Panc1 (cell line): ENCODE measurements at regions of chr13 and their contacts with region 1.

Region 1: GRCh38 chr13:50387051-50387581 is 371.9 kb downstream of the KCNRG start:
- DNase-seq: no peak
- ATAC-seq: no peak
- H3K4me3 ChIP-seq: no peak overlapping the region
- H3K27ac ChIP-seq: peak overlapping the region; percentile 61; the same call in 1 of the 2 replicates
- H3K4me1 ChIP-seq: peaks cover 7% of the 10 kb centered on the region
- H3K27me3 ChIP-seq: no peaks in the 10 kb centered on the region
- CTCF ChIP-seq: peak; percentile 3

Region 2: DNA sequence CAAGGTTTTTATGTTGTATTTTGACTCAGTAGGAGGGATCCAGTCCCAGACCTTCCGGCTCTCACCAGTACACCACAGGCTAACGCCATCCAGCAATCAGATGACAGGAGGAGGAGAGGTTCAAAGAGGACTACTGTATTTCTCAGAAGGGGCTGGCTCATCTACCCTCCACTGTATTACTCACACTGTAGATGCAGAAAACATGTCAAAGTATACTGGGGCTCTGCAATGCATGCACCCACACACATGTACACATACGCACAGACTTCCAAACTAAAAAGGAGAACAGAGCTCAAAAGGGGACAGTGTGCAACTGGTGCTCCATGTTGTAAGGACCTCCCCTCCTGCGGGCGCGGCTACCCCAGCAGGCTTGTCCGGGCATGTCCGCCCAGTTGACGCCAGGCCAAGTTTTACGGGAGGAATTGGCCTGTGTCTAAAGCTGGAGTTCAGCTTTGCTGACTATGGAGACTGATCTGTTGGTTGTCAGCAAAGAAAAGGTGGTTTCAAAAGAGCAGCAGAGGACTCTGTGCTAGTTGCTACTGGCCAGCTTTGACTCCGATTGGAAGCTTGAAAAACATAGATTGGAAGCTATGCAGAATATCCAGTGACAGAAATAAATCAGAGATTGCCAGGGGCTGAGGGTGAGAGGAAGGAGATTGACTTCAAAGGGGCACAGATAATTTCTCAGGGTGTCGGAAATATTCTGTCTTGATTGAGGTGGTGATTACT is 142.2 kb after region 1 on chr13:
- CTCF ChIA-PET with region 1: no interaction called
- POLR2A ChIA-PET with region 1: no interaction called
- in situ Hi-C with region 1: no loop called
- intact Hi-C with region 1: no loop called
- DNase-seq: no peak
- ATAC-seq: peak; percentile 88
- H3K4me3 ChIP-seq: peak overlapping the region in 1 of 2 experiments; percentile 36; a peak in 3 of 4 replicates
- H3K27ac ChIP-seq: peak overlapping the region; percentile 85
- H3K4me1 ChIP-seq: peaks cover 36% of the 10 kb centered on the region
- H3K27me3 ChIP-seq: no peaks in the 10 kb centered on the region
- CTCF ChIP-seq: no peak

Region 3: DNA sequence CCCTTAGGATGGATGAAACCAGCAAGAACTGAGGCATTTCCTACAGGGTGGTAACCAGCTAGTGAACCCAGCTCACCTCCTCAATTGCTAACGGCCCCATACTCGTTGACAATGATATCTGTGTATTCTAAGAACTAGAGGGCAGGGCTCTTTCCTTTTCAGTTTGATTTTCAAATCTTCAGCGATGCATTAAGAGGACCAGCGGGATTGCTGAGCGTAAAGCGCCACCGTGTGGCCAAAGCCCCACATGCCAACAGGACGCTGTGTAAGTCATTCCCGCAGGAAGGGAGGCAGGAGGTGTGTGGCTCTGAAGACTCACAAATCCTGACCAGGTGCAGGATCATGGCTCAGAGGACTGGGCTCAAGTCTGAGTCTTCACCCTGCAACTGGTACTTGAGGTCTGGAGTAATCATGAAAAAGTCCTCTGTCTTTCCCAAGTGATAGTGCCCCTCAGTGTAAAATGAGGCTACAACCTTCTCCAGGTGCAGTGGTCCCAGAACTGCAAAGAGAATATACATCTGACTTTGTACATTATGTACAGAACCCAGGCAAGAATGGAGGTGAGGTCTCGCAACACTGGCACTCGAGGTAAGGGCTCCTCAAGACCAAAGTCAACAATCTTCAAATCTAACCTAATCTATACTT is 683.0 kb after region 1 on chr13:
- CTCF ChIA-PET with region 1: no interaction called
- POLR2A ChIA-PET with region 1: interaction called, 10 read pairs
- in situ Hi-C with region 1: no loop called
- intact Hi-C with region 1: no loop called
- DNase-seq: peak; percentile 72
- ATAC-seq: peak; percentile 94
- H3K4me3 ChIP-seq: no peak overlapping the region
- H3K27ac ChIP-seq: peak overlapping the region; percentile 51; the same call in 1 of the 2 replicates
- H3K4me1 ChIP-seq: peaks cover 2% of the 10 kb centered on the region; the same call in 1 of the 2 replicates
- H3K27me3 ChIP-seq: no peaks in the 10 kb centered on the region
- CTCF ChIP-seq: peak; percentile 86